ENCODE measurements at regions of chr17 and their contacts with region 1.

Region 1: DNA sequence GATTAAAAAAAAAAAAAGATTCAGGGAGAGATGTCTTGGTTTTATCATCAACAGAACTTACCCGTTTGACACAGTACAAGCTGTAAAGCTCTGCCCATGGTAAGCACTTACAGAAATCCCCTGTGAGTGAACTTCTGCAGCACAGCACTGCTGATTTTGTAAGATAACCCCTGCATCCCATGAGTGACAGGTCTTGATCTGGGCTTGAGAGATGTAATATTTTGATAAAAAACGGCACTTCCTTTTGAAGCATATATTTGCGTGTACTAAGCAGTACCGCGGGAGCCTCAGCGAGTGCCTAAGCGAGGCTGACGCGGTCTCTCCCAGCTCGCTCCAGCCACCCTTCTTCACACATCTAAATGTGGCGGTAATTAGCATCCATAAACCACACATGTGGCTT is 50.5 kb downstream of the IKZF3 start:
- DNase-seq: peak; percentile 31
- ATAC-seq: peak; percentile 59
- H3K4me3 ChIP-seq: no peak overlapping the region
- H3K4me3 Mint-ChIP-seq: peak overlapping the region; percentile 60
- H3K27ac ChIP-seq: peak overlapping the region in 1 of 2 donors; percentile 48
- H3K27ac Mint-ChIP-seq: peak overlapping the region; percentile 88
- H3K4me1 ChIP-seq: peaks cover 30 to 37% of the 10 kb centered on the region in 2 donors
- H3K4me1 Mint-ChIP-seq: peaks cover 71% of the 10 kb centered on the region
- H3K27me3 ChIP-seq: no peaks in the 10 kb centered on the region
- H3K27me3 Mint-ChIP-seq: no peaks in the 10 kb centered on the region
- CTCF ChIP-seq: no peak

Region 2: DNA sequence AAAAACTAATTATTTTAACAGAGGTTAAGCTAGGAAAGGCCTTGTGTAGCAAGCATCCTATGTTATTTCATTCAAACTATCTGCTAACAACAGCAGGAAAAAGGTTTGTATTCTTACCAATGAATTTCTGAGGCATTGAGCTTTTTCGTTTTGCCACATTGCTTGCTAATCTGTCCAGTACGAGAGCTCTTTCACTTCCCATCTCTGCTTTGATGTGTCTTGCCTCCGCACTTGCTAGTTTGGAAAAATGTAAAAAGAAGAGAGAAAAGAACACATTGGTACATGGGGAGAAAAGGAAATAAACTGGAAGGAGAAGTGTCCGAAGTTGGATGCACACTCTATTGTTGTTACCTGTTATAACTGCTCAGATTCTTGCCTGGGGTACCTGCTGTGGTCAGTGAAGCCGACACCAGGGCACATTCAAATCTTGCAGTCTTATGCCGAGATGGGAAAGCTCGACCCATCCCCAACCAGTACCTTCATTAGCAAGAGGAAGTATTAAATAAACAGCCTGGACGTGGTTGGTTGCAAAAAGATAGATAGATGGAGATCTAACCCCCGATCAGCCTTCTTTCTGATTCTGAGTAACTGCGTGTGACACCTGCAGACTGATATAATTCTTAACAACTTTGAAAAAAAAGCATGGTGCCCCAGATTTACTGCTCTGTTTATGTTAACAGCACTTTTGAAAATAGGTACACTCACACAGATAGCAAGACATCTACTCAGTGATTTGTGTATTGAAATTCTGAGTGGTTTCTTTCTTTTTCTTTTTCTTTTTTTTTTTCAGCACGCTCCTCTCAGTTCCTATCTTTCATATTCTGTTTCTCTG is 35.9 kb before region 1 on chr17:
- CTCF ChIA-PET with region 1: interaction called, 5 read pairs
- POLR2A ChIA-PET with region 1: interaction called, 6 read pairs
- intact Hi-C with region 1: loop called (anchors 2 kb)
- DNase-seq: peak; percentile 59
- ATAC-seq: peak; percentile 36
- H3K4me3 ChIP-seq: peak overlapping the region; percentile 17 to 86 (median 51)
- H3K4me3 Mint-ChIP-seq: peak overlapping the region; percentile 89
- H3K27ac ChIP-seq: peak overlapping the region; percentile 33 to 86
- H3K27ac Mint-ChIP-seq: peak overlapping the region; percentile 93
- H3K4me1 ChIP-seq: peaks cover 80 to 90% of the 10 kb centered on the region in 2 donors
- H3K4me1 Mint-ChIP-seq: peaks cover 81% of the 10 kb centered on the region
- H3K27me3 ChIP-seq: no peaks in the 10 kb centered on the region
- H3K27me3 Mint-ChIP-seq: no peaks in the 10 kb centered on the region
- CTCF ChIP-seq: no peak

Region 3: DNA sequence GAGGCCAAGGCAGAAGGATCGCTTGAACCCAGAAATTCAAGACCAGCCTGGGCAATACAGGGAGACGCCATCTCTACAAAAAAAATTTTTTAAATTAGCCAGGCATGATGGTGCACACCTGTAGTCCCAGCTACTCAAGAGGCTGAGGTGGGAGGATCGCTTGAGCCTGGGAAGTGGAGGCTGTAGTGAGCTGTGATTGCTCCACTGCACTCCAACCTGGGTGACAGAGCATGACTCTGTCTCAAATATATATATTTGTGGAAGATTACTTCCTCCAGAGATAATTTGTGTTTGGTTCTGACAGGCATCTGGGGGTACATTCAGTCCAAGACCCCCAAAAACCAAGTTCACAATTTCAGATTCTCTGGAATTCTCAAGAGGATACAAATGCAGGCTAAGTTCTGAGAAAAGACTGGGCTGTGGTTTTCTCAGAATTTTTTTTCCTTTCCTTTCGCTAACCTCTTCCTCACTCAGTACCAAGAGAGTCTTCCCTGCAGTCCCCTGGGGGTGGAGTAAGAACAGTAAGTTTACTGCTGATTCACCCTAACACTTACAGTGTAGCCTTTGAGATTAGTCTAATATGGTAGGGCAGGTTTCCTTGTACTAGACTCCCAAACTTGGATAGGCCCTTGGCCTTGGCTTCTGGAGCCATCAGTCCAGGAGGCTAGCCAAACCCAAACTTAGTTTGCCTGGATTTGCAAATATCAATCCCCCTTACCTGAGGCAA is 89.7 kb after region 1 on chr17:
- CTCF ChIA-PET with region 1: no interaction called
- POLR2A ChIA-PET with region 1: no interaction called
- intact Hi-C with region 1: no loop called
- DNase-seq: no peak
- ATAC-seq: no peak
- H3K4me3 ChIP-seq: no peak overlapping the region
- H3K4me3 Mint-ChIP-seq: no peak overlapping the region
- H3K27ac ChIP-seq: peak overlapping the region in 1 of 2 donors; percentile 3
- H3K27ac Mint-ChIP-seq: no peak overlapping the region
- H3K4me1 ChIP-seq: peaks cover 3 to 6% of the 10 kb centered on the region in 2 donors
- H3K4me1 Mint-ChIP-seq: peaks cover 3% of the 10 kb centered on the region
- H3K27me3 ChIP-seq: no peaks in the 10 kb centered on the region
- H3K27me3 Mint-ChIP-seq: no peaks in the 10 kb centered on the region
- CTCF ChIP-seq: no peak

Measured in B cell (primary cell).